Activated B cell treated with CpG ODN at 0.5 μM for 24 hours (primary cell): ENCODE measurements at regions of chr7 and their contacts with region 1.

Region 1: GRCh38 chr7:2451171-2452073 is 24.8 kb downstream of the GRIFIN start:
- DNase-seq: peak; percentile 81
- ATAC-seq: peak; percentile 99
- H3K4me3 Mint-ChIP-seq: peak overlapping the region; percentile 74
- H3K27ac Mint-ChIP-seq: no peak overlapping the region
- H3K4me1 Mint-ChIP-seq: peaks cover 6% of the 10 kb centered on the region
- H3K27me3 Mint-ChIP-seq: no peaks in the 10 kb centered on the region
- CTCF ChIP-seq: peak; percentile 88

Region 2: DNA sequence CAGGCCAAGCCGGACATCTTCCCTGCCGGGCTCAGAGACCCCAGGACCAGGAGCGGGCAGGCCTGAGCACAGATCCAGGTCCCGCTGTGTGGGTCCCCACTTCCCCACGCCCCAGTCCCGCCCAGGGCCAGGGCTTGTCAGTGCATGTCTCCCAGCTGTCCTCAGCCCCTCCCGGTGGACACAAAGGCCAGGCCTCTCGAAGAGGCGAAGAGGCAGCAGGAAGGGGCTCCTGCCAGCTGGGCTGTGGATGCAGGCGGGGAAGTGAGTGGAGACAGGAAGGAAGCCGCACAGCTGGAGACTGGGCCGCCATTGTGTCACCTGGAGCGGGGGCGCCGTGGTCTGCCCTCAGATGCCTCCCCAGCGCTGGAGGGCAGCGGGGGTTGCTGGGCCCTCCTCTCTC is 20.0 kb after region 1 on chr7:
- CTCF ChIA-PET with region 1: interaction called, 51 read pairs
- POLR2A ChIA-PET with region 1: interaction called, 5 read pairs
- intact Hi-C with region 1: loop called (anchors 1 kb)
- DNase-seq: no peak
- ATAC-seq: no peak
- H3K4me3 Mint-ChIP-seq: no peak overlapping the region
- H3K27ac Mint-ChIP-seq: no peak overlapping the region
- H3K4me1 Mint-ChIP-seq: peaks cover 4% of the 10 kb centered on the region
- H3K27me3 Mint-ChIP-seq: peaks cover 4% of the 10 kb centered on the region
- CTCF ChIP-seq: no peak

Region 3: DNA sequence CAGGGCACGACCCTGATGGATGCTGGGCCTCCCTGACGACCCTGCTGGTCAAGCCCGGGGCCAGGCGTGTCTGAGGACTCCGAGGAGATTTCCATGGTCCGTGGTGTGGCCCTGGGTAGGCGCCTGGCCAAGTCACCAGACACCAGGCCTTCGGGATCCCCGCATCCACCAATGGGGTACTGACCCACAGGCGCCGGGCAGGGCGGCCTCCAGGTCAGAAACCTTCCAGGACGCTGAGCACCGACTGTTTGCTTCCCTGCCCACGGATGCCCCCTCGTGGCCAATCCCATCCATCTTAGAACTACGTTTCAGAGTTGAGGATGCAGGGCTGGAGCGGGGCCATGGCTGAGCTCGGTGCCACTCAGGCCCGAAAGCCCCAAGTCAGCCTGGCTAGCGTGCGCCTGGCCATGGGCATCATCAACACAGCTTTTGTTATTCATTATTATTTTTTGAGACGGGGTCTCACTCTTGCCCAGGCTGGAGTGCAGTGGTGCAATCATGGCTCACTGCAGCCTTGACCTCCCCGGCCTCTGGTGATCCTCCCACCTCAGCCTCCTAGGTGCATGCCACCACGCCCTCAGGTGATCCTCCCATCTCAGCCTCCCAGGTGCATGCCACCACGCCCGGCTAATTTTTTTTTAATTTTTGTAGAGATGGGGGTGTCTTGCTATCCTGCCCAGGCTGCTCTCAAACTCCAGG is 229.5 kb after region 1 on chr7:
- CTCF ChIA-PET with region 1: interaction called, 31 read pairs
- POLR2A ChIA-PET with region 1: interaction called, 5 read pairs
- intact Hi-C with region 1: loop called (anchors 1 kb)
- DNase-seq: peak; percentile 55
- ATAC-seq: peak; percentile 73
- H3K4me3 Mint-ChIP-seq: no peak overlapping the region
- H3K27ac Mint-ChIP-seq: no peak overlapping the region
- H3K4me1 Mint-ChIP-seq: no peaks in the 10 kb centered on the region
- H3K27me3 Mint-ChIP-seq: peaks cover 2% of the 10 kb centered on the region
- CTCF ChIP-seq: no peak